Left colon (tissue), 2 donors: ENCODE measurements at regions of chr17 and their contacts with region 1.

Region 1: DNA sequence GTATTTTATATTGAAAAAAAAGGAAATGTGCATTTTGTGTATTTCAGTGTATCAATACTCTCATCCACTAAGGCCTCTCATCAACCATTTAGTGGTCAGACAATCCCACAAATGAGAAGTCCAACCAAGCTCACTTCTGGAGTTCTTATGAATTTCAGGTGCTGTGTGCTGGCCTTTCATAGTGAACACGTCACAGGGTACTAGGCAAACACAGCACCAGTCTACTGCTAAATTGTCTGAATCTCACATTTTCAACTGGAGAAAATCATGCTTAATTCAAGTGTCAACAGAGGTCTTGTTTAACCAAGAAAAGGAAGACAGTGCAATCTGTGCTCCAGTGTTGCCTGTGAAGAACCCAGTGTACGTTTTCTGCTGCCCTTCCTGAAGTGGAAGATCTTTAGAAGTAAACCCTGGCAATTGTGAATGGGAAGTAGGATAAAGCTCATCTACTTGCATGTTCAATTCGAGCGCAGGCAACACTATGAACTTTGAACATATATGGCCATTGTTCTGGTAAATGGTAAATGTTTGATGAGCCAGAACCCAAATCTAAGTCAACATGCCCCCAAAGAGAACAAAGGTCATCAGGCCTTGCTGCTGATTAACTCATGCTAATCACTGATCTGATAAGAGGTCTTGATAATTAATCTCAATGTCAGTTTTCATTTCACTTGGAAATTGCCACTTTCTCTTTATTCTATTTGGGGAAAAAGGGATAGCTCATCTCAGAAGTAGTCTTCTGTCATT is 439.2 kb upstream of the SOX9 start:
- DNase-seq: peak; percentile 6 to 24
- ATAC-seq: peak; percentile 98

Region 2: GRCh38 chr17:71628306-71628705 is 53.3 kb before region 1 on chr17:
- intact Hi-C with region 1: loop called in 1 of 2 experiments (anchors 10 kb)
- DNase-seq: no peak
- ATAC-seq: no peak

Region 3: DNA sequence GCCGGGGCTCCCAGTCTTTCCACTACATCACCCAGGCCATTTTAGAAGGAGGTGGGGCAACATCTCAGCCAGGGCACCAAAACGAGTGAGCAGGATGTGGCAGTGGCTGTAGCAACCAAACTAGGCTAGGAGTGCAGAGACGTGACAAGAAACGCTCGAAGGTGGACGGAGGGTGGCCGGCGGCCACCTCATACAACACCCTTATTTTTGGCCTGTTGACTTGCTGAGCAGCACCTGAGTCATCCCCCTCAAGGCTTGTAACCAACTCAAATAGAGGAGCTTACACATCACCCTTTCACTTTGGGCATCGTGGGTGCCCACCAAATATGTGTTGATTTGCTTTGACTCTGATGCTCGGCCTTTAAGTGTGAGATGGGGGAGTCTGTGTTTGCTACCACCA is 415.5 kb after region 1 on chr17:
- intact Hi-C with region 1: no loop called
- DNase-seq: no peak
- ATAC-seq: no peak